ENCODE measurements at regions of chr1 and their contacts with region 1.

Region 1: GRCh38 chr1:101128211-101128727 is 102.7 kb upstream of the DPH5 start:
- DNase-seq: peak in 7 of 9 experiments; percentile 17 to 71 (median 46)
- ATAC-seq: peak; percentile 75
- H3K4me3 ChIP-seq: peak overlapping the region; percentile 1 to 7
- H3K4me3 Mint-ChIP-seq: peak overlapping the region; percentile 53
- H3K27ac ChIP-seq: peak overlapping the region; percentile 20 to 64
- H3K27ac Mint-ChIP-seq: peak overlapping the region; percentile 90
- H3K4me1 ChIP-seq: peaks cover 53% of the 10 kb centered on the region
- H3K4me1 Mint-ChIP-seq: peaks cover 69% of the 10 kb centered on the region
- H3K27me3 ChIP-seq: no peaks in the 10 kb centered on the region
- H3K27me3 Mint-ChIP-seq: no peaks in the 10 kb centered on the region
- CTCF ChIP-seq: no peak

Region 2: DNA sequence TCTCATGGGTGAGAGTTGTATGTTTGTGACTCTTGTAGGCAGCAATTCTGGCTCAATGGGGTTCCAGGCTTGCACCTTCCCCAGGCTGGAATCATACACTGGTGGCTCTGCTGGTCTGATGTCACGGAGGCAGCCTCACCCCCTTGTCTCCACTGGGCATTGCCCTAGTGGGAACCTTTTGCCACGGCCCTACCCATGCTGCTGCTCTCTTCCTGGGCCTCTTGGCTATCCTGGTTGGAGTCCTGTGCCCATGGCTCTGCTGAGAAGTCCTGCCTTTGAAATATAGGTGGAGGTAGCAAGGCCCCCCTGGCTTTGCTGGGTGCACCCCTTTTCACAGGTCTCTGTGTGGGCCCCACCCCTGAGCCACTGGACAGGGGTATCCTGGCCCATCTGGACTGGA is 32.7 kb before region 1 on chr1:
- CTCF ChIA-PET with region 1: no interaction called
- POLR2A ChIA-PET with region 1: no interaction called
- intact Hi-C with region 1: loop called in 1 of 2 experiments (anchors 5 kb)
- DNase-seq: no peak
- ATAC-seq: no peak
- H3K4me3 ChIP-seq: no peak overlapping the region
- H3K4me3 Mint-ChIP-seq: no peak overlapping the region
- H3K27ac ChIP-seq: no peak overlapping the region
- H3K27ac Mint-ChIP-seq: no peak overlapping the region
- H3K4me1 ChIP-seq: no peaks in the 10 kb centered on the region
- H3K4me1 Mint-ChIP-seq: no peaks in the 10 kb centered on the region
- H3K27me3 ChIP-seq: no peaks in the 10 kb centered on the region
- H3K27me3 Mint-ChIP-seq: no peaks in the 10 kb centered on the region
- CTCF ChIP-seq: no peak